Heart left ventricle (tissue), 16 donors: ENCODE measurements at regions of chr22 and their contacts with region 1.

Region 1: GRCh38 chr22:28855355-28856094 is 27.8 kb upstream of the ZNRF3 start:
- DNase-seq: peak in 2 of 5 donors; percentile 30 to 40
- ATAC-seq: peak; percentile 37 to 75 (median 62)
- H3K4me3 ChIP-seq: no peak overlapping the region
- H3K27ac ChIP-seq: no peak overlapping the region
- H3K4me1 ChIP-seq: peaks cover 0 to 6% (median 0%) of the 10 kb centered on the region in 12 donors
- H3K27me3 ChIP-seq: no peaks in the 10 kb centered on the region
- CTCF ChIP-seq: peak; percentile 83 to 97 (median 90)
- POLR2A ChIP-seq: no peak

Region 2: GRCh38 chr22:28800308-28801077 is 55.0 kb before region 1 on chr22 and contains the start of gene XBP1:
- intact Hi-C with region 1: no loop called
- DNase-seq: peak; percentile 95 to 98 (median 97)
- ATAC-seq: peak; percentile 97 to 98 (median 97)
- H3K4me3 ChIP-seq: peak within 1 kb of the TSS; percentile 70 to 100 (median 90)
- H3K27ac ChIP-seq: peak within 1 kb of the TSS; percentile 97 to 100 (median 100)
- H3K4me1 ChIP-seq: peaks cover 20 to 65% (median 48%) of the 10 kb centered on the region in 12 donors
- H3K27me3 ChIP-seq: no peaks in the 10 kb centered on the region
- CTCF ChIP-seq: no peak
- POLR2A ChIP-seq: peak; percentile 93 to 99
- total RNA-seq, gene XBP1: 59.8 to 133 (median 88.1) TPM

Region 3: GRCh38 chr22:28817919-28818909 is 37.3 kb before region 1 on chr22:
- intact Hi-C with region 1: no loop called
- DNase-seq: peak in 3 of 5 donors; percentile 29 to 55 (median 50)
- ATAC-seq: peak in 3 of 4 donors; percentile 81 to 85 (median 84)
- H3K4me3 ChIP-seq: no peak overlapping the region
- H3K27ac ChIP-seq: peak overlapping the region in 10 of 12 donors; percentile 16 to 80 (median 38)
- H3K4me1 ChIP-seq: peaks cover 0 to 46% (median 12%) of the 10 kb centered on the region in 12 donors
- H3K27me3 ChIP-seq: no peaks in the 10 kb centered on the region
- CTCF ChIP-seq: no peak
- POLR2A ChIP-seq: no peak

Region 4: GRCh38 chr22:28951969-28952521 is 96.5 kb after region 1 on chr22:
- intact Hi-C with region 1: loop called in 3 of 10 experiments (anchors 5 kb)
- DNase-seq: peak in 2 of 5 donors; percentile 10 to 28
- ATAC-seq: peak; percentile 23 to 68 (median 56)
- H3K4me3 ChIP-seq: no peak overlapping the region
- H3K27ac ChIP-seq: peak overlapping the region in 1 of 12 donors; percentile 28
- H3K4me1 ChIP-seq: peaks cover 0 to 23% (median 11%) of the 10 kb centered on the region in 12 donors
- H3K27me3 ChIP-seq: peaks cover 0 to under 1% (median 0%) of the 10 kb centered on the region in 9 donors
- CTCF ChIP-seq: peak in 7 of 12 donors; percentile 16 to 45 (median 21)
- POLR2A ChIP-seq: no peak

Region 5: DNA sequence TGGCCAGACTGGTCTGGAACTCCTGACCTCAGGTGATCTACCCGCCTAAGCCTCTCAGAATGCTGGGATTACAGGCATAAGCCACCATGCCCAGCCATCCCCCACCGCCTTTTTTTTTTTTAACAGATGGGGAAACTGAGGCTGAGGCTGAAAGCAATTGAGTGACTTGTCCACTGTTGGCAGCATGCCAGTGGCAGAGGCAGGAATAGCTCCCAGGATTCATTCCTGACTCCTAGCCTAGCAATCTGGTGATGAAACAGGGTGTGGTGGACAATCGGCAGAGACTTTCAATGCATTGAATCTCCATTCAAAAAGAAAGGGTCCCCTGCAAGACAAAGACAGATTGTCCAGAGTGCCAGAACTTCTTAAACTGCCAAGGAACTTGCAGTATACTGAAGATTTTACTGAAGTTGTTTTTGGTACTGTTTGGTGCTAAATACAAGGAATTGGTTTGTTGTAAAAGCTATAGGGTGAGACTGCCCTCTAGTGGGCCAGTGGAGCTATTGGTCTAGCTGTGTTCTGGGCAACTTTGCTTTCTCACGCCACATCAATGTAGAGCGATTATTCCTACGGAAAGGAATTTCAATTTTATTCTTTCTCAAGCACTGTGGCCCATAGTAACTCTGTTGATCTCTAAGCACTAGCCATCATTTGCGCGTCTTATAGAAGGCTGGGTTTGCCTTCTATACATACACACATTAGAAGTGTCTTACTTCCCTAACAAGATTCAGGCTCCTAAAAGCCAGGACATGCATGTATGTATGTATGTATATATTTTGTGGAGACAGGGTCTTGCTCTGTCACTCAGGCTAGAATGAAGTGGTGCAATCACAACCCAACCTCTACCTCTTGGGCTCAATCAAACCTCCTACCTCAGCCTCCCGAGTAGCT is 185.1 kb after region 1 on chr22:
- intact Hi-C with region 1: loop called (anchors 1 to 2 kb)
- DNase-seq: peak in 4 of 5 donors; percentile 39 to 61 (median 52)
- ATAC-seq: peak in 3 of 4 donors; percentile 69 to 84 (median 76)
- H3K4me3 ChIP-seq: no peak overlapping the region
- H3K27ac ChIP-seq: no peak overlapping the region
- H3K4me1 ChIP-seq: peaks cover 0 to 10% (median 0%) of the 10 kb centered on the region in 12 donors
- H3K27me3 ChIP-seq: no peaks in the 10 kb centered on the region
- CTCF ChIP-seq: peak; percentile 93 to 99 (median 96)
- POLR2A ChIP-seq: no peak